PC-3 (cell line): ENCODE measurements at regions of chr11 and their contacts with region 1.

Region 1: DNA sequence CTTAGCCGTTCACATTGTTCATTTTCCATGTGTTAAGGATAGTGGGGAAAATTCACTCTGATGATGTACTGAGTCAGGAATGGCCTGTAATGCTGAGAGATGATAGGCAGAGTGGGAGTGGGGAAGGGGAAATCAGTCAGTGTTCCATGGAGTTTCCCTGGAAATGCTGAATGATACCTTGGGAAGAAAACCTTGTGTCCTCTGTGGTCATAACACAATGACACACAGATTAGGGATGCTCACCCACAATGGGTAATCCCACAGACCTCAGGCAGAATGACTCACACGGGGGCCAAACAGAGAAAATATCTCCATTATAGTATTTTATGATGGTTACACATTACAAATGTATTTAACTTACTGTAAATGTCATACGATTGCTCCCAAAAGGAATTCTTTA is 118.0 kb downstream of the SNX19 start:
- DNase-seq: peak; percentile 99
- ATAC-seq: peak; percentile 79
- H3K4me3 ChIP-seq: no peak overlapping the region
- H3K27ac ChIP-seq: peak overlapping the region; percentile 90
- H3K4me1 ChIP-seq: peaks cover 53% of the 10 kb centered on the region
- H3K27me3 ChIP-seq: no peaks in the 10 kb centered on the region
- CTCF ChIP-seq: no peak

Region 2: GRCh38 chr11:130700092-130700491 is 98.2 kb before region 1 on chr11:
- CTCF ChIA-PET with region 1: no interaction called
- POLR2A ChIA-PET with region 1: no interaction called
- intact Hi-C with region 1: loop called (anchors 2 kb)
- DNase-seq: peak; percentile 25
- ATAC-seq: peak; percentile 92
- H3K4me3 ChIP-seq: no peak overlapping the region
- H3K27ac ChIP-seq: no peak overlapping the region
- H3K4me1 ChIP-seq: peaks cover 7% of the 10 kb centered on the region; the same call in 1 of the 2 replicates
- H3K27me3 ChIP-seq: no peaks in the 10 kb centered on the region
- CTCF ChIP-seq: no peak

Region 3: DNA sequence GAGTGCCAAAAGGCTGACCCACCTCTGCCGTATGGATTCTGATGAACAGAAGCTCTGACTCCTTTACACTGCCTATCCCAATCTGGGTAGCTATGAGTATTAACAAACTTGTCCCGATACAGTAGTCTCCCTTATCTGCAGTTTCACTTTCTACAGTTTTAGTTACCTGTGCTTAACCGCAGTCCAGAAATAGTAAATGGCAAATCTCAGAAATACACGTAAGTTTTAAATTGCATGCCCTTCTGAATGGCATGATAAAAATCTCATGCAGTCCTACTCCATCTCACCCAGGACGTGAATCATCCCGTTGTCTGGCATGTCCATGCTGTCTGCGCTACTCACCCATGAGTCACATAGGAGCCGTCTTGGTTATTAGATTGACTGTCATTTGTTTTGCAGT is 49.2 kb after region 1 on chr11:
- CTCF ChIA-PET with region 1: no interaction called
- POLR2A ChIA-PET with region 1: no interaction called
- intact Hi-C with region 1: loop called (anchors 5 kb)
- DNase-seq: peak; percentile 99
- ATAC-seq: peak; percentile 92
- H3K4me3 ChIP-seq: peak overlapping the region; percentile 57
- H3K27ac ChIP-seq: peak overlapping the region; percentile 97
- H3K4me1 ChIP-seq: peaks cover 53% of the 10 kb centered on the region
- H3K27me3 ChIP-seq: no peaks in the 10 kb centered on the region
- CTCF ChIP-seq: no peak